Activated B cell treated with CpG ODN at 0.5 μM for 24 hours (primary cell): ENCODE measurements at regions of chr14 and their contacts with region 1.

Region 1: DNA sequence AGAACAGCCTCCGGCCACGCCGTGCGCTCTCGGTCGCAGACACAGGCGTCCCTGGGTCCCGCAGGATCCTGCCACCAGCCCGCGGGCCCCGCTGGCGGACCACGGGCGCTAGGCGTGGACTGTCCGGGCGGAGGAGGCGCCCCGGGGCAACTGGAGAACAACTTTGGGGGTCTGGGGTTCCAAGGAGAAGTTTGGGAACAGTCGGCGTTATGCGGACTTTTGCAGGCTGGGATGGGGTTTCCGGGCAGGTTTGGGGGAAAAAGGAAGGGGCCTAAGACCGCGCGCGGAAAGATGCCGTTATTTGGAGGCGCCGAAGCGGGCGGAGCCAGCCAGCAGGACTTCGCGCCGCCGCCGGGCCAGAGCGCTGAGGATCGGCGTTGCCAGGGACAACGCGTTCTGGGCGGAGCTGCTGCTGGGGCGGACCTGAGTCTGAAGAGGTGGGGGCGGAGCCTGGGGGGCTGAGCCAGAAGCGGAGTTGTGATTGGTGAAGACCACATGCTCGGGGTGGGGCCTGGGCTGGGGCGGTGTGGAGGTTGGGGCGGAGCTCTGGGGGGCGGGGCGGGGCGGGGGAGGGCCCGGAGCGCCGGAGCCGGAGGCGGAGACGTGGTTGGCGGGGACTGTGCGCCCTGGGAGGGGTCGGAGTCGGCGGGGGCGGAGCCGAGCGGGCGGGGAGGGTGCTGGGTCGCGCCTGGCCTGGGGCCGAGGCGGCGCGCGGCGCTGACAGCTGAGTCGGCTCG is at the start of gene CYP46A1:
- DNase-seq: peak; percentile 98
- ATAC-seq: peak; percentile 96
- H3K4me3 Mint-ChIP-seq: peak within 1 kb of the TSS; percentile 92
- H3K27ac Mint-ChIP-seq: peak within 1 kb of the TSS; percentile 86
- H3K4me1 Mint-ChIP-seq: peaks cover 26% of the 10 kb centered on the region
- H3K27me3 Mint-ChIP-seq: peaks cover 34% of the 10 kb centered on the region
- CTCF ChIP-seq: no peak
- total RNA-seq, gene CYP46A1: 0.07 TPM in 1 of 2 replicates, not detected in the other

Region 2: DNA sequence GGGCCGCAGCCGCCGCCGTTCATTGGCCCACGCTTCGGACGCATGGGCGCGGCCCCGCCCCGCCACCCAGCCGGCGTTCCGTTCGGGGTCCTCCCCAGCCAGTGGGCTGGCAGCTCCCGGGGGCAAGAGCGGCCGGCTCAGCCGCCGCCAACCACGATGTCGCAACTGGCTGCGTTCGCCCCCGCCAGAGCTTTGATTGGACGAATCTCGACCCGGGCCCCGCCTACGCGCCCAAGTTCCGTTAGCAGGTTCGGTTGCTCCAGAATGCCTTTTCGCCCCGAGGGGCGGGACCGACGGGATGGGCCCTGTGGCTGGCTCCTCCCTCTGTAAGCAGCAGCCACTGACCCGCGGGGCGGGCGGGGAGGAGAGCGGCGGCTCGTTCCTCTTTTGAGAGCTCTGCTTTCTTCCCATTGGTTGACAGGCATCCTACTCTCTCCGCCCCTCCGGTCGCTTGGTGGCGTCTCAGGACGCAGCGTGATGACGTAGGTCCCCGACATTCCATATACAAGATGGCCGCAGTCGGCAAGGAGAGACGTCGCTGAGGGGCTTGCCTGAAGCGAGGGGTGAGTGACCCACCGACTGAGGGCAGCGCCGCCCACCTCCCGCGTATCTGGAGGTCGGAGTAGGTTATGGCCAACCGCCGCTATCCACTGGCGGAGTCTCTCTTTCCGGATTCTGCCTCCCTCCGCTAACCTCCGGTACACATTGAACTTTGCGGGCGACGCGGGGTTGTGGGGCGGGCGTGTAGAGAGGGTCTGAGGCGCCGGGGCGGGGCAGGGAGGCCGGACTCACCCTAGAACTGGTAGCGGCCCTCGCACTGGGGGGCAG is 202.7 kb before region 1 on chr14 and contains the start of gene CCNK:
- CTCF ChIA-PET with region 1: no interaction called
- POLR2A ChIA-PET with region 1: interaction called, 15 read pairs
- intact Hi-C with region 1: loop called (anchors 1 kb)
- DNase-seq: peak; percentile 99
- ATAC-seq: peak; percentile 87
- H3K4me3 Mint-ChIP-seq: peak within 1 kb of the TSS; percentile 97
- H3K27ac Mint-ChIP-seq: peak within 1 kb of the TSS; percentile 96
- H3K4me1 Mint-ChIP-seq: peaks cover 59% of the 10 kb centered on the region
- H3K27me3 Mint-ChIP-seq: no peaks in the 10 kb centered on the region
- CTCF ChIP-seq: no peak
- total RNA-seq, gene CCNK: 76.7 and 79.2 TPM in 2 replicates

Region 3: DNA sequence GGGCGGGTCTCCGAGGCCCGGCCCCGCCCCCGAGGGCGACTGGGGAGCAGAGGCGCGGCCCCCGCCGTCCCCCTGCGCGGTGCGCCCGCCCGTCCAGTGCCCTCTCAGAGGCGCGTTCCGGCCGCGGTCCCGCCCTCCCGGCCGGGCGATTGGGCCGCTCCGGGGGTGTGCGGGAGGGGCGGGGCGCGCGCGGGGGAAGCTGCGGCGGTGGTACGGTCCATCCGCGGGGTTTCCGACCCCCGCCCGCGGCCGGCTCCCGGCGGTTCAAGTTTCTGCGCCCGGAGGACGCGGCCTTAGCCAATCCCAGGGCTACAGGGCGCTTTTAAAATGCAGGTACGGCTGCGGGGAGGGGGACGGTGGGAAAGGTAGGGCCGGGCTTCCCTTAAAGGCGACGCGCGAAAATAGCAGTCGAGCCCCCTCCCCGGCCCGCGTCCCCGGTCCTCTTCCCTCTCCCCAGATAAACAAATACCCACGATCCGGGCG is 79.5 kb before region 1 on chr14:
- CTCF ChIA-PET with region 1: no interaction called
- POLR2A ChIA-PET with region 1: interaction called, 4 read pairs
- intact Hi-C with region 1: loop called (anchors 1 kb)
- DNase-seq: peak; percentile 96
- ATAC-seq: peak; percentile 94
- H3K4me3 Mint-ChIP-seq: peak overlapping the region; percentile 88
- H3K27ac Mint-ChIP-seq: peak overlapping the region; percentile 71
- H3K4me1 Mint-ChIP-seq: peaks cover 9% of the 10 kb centered on the region
- H3K27me3 Mint-ChIP-seq: no peaks in the 10 kb centered on the region
- CTCF ChIP-seq: no peak

Region 4: DNA sequence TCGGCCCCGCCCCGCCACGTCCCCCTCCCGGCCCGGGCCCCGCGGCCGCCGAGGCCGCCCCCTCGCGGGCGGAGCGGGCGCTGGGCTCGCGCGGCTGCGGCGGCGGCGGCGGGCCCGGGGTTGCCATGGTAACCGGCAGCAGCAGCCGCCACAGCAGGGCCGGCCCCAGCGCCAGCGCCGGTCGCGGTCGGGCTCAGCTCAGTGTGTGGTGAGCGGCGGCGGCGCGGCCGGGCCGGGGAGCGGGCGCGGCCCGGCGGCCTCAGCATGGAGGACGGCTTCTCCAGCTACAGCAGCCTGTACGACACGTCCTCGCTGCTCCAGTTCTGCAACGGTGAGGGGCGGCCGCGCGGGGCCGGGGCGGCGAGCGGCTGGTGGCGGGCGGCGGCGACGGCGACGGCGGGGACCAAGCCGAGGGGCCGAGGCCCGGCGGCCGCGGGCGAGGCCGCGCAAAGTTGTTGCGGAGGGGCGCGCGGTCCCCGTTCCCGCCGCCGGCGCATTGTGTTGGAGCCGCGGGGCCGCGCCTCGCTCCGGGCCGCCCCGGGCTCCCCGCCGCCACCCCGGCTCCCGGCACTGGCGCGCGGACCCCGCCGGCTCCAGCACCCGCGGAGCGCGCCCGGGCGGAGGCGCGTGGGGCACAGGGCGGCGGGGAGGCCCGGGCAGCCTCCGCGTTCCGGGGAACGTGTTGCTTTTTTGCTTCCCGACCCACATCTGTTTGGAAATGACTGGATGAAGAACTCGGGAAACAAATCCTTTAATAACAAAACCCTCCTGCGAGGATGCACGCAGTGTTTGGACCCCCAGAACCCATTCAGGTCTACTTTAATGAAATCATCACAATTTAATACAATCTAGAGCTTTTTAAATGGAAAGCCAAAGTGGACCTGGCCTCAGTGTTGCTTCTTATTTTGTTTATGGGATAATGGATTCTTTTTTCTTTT is 109.7 kb after region 1 on chr14 and contains the start of gene EML1:
- CTCF ChIA-PET with region 1: no interaction called
- POLR2A ChIA-PET with region 1: no interaction called
- intact Hi-C with region 1: loop called (anchors 1 kb)
- DNase-seq: peak; percentile 57
- ATAC-seq: peak; percentile 94
- H3K4me3 Mint-ChIP-seq: peak within 1 kb of the TSS; percentile 53
- H3K27ac Mint-ChIP-seq: no peak within 1 kb of the TSS
- H3K4me1 Mint-ChIP-seq: peaks cover 6% of the 10 kb centered on the region
- H3K27me3 Mint-ChIP-seq: peaks cover 60% of the 10 kb centered on the region
- CTCF ChIP-seq: no peak
- total RNA-seq, gene EML1: not detected in 2 replicates

Region 5: GRCh38 chr14:99971087-99971940 is 287.5 kb after region 1 on chr14:
- CTCF ChIA-PET with region 1: no interaction called
- POLR2A ChIA-PET with region 1: no interaction called
- intact Hi-C with region 1: loop called (anchors 5 kb)
- DNase-seq: peak; percentile 68
- ATAC-seq: peak; percentile 90
- H3K4me3 Mint-ChIP-seq: peak overlapping the region; percentile 76
- H3K27ac Mint-ChIP-seq: no peak overlapping the region
- H3K4me1 Mint-ChIP-seq: peaks cover 12% of the 10 kb centered on the region
- H3K27me3 Mint-ChIP-seq: peaks cover 46% of the 10 kb centered on the region
- CTCF ChIP-seq: no peak

Region 6: DNA sequence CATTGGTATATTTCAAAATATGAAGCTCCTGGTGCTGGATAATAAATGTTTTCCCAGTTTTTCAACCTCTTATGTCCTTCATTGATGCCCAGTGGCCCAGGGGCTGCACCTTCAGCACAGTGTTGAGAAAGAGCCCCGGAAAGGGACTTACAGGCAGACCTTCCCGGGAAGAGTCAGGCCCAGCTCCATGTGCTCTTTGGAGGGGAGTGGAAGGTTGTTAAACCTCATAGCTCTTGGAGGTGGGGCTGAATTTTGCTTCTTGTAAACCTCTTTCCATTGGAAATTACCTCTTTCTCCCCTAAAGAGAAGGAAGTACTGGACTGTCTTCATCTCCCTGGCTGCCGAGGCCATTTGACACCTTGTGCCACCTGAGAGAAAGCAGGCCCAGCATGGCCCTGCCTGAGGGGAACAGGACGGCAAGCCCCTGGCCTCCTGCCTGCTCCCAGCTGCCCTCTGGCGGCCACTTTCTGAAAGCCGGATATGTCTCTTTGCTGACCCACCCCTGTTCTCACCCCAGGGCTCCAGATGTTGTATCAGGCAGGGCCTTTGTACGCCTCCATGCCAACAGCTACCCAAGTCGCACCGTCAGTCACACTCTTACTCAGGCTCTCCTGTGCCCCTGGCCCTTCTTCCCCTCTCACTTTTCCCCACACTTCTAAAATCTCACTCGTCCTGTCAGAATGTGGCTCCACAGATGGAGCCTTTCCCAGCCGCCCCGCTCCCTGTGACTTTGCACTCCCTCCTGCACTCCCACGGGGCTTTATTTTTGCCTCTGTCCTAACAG is 424.4 kb after region 1 on chr14:
- CTCF ChIA-PET with region 1: no interaction called
- POLR2A ChIA-PET with region 1: no interaction called
- intact Hi-C with region 1: no loop called
- DNase-seq: peak; percentile 80
- ATAC-seq: peak; percentile 98
- H3K4me3 Mint-ChIP-seq: no peak overlapping the region
- H3K27ac Mint-ChIP-seq: peak overlapping the region; percentile 86
- H3K4me1 Mint-ChIP-seq: peaks cover 49% of the 10 kb centered on the region
- H3K27me3 Mint-ChIP-seq: no peaks in the 10 kb centered on the region
- CTCF ChIP-seq: peak; percentile 17